AG04449 (cell line): ENCODE measurements at regions of chr15 and their contacts with region 1.

Region 1: DNA sequence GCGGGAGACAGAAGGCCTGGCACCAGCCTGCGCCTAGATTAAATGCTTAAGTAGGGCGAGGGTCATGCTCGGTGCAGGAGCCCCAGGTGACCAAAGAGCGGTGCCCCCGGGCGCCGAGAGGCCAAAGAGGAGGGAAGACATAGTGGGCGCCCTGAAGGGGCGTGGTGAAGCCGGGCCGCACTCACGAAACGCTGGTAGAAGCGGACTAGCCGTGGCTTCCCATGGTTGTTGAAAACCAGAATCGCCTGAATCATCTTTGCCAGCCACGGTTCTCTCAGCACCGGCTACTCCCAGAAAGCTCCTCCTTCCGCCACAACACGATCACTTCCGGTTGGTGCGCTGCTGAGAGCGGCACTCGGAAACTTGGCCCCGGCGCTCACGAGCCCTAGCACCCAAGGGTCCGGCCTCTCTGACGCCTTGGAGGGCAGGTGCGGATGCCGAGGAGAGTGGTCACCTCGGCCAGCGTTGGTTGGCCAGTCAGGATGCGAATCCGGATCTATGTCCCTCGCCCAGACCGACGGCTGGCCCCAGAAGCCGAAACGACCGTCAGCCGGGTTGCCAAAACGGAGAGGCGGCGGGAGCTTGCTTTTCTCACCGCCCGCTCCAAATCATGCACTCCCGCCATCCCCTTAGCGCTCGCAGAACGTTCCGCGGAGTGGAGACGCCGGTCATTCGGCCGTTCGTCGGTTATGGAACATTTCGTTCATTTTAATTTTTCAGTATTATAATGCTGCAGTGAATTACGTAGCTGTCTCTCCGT is at the start of gene AP3S2:
- DNase-seq: peak; percentile 62
- H3K4me3 ChIP-seq: peak within 1 kb of the TSS; percentile 91
- CTCF ChIP-seq: no peak

Region 2: DNA sequence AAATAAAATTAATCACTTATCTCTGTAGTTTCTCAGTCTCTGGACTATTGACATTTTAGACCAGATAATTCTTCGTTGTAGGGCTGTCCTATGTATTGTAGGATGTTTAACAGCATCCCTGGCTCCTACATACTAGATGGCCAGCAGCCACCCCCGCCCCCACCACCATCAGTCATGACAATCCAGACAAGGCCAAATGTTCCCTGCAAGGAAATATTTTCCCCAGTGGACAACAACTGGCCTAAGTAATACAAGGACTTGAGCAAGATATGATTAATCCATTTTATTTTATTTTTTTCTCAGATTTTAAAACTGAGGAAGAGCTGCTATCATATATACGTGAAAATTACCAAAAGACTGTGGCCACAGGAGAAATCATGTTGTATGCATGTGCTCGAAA is 294.9 kb before region 1 on chr15:
- CTCF ChIA-PET with region 1: no interaction called
- POLR2A ChIA-PET with region 1: no interaction called
- DNase-seq: no peak
- H3K4me3 ChIP-seq: no peak overlapping the region
- CTCF ChIP-seq: no peak

Region 3: DNA sequence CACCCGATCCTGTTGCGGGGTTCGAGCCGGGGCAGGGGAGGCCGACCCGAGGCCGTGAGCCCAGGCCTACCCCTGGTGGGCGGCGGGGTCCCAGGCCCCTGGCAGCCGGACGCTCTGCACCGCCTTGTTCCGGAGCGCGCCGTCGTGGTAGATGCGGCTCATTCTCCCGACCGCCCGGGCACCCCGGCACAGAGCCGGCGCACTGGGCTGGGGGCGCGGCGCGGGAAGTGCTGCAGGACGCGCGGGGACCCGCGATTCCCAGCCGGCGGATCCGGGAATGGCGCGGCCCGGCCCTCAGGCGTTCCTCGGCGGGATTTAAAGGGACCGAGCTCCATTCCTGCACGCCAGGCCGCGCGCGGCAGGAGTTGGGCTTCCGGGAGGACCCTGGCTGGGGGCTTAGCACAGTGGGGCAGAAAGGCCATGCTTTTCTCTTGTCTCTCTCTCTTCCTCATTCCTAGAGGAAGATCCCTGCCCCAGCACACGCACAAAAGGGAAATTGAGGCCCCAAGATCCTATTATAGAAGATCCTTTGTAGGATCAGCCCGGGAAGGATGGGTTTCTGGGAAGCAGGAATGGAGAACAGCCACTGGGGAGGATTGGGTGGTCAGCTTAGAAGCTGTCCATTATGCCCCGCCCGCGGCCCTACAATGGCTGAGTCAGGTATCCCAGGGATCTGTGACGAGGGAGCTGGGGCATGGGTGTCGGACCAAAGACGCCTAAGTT is 19.0 kb after region 1 on chr15 and contains the start of gene ARPIN:
- CTCF ChIA-PET with region 1: interaction called, 12 read pairs
- POLR2A ChIA-PET with region 1: interaction called, 7 read pairs
- DNase-seq: no peak
- H3K4me3 ChIP-seq: peak within 1 kb of the TSS; percentile 71
- CTCF ChIP-seq: no peak

Region 4: GRCh38 chr15:90086868-90087268 is 193.0 kb after region 1 on chr15:
- CTCF ChIA-PET with region 1: interaction called, 10 read pairs
- POLR2A ChIA-PET with region 1: no interaction called
- DNase-seq: no peak
- H3K4me3 ChIP-seq: no peak overlapping the region
- CTCF ChIP-seq: peak; percentile 74

Region 5: DNA sequence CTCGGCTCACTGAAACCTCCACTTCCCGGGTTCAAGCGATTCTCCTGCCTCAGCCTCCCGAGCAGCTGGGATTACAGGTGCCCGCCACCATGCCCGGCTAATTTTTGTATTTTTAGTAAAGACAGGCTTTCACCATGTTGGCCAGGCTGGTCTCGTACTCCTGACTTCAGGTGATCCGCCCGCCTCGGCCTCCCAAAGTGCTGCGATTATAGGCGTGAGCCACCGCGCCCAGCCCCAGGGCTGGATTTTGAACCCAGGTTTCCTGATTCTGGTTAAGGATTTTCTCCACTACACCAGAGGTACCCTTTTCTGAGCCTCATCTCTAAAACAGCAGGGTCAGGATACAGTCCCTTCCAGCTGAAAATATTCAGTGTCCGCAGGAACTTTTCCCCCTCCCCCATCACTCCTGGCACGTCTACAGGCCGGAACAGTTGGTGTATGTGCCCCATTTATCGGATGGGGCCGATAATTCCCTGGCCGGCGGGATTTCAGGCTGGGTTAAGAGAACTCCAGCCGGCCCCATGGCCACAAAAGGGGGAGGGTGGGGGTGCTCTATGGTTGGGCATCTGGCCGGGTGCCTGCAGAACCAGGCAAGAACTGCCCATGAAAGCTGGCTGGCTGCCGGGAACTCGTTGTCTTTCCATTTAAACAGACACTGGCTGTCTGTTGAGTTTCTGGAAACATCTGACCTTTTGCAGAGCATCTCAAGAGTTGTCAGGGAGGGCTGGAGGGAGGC is 280.4 kb after region 1 on chr15:
- CTCF ChIA-PET with region 1: no interaction called
- POLR2A ChIA-PET with region 1: no interaction called
- DNase-seq: no peak
- H3K4me3 ChIP-seq: no peak overlapping the region
- CTCF ChIP-seq: no peak